ENCODE measurements at regions of chr15 and their contacts with region 1.

Region 1: DNA sequence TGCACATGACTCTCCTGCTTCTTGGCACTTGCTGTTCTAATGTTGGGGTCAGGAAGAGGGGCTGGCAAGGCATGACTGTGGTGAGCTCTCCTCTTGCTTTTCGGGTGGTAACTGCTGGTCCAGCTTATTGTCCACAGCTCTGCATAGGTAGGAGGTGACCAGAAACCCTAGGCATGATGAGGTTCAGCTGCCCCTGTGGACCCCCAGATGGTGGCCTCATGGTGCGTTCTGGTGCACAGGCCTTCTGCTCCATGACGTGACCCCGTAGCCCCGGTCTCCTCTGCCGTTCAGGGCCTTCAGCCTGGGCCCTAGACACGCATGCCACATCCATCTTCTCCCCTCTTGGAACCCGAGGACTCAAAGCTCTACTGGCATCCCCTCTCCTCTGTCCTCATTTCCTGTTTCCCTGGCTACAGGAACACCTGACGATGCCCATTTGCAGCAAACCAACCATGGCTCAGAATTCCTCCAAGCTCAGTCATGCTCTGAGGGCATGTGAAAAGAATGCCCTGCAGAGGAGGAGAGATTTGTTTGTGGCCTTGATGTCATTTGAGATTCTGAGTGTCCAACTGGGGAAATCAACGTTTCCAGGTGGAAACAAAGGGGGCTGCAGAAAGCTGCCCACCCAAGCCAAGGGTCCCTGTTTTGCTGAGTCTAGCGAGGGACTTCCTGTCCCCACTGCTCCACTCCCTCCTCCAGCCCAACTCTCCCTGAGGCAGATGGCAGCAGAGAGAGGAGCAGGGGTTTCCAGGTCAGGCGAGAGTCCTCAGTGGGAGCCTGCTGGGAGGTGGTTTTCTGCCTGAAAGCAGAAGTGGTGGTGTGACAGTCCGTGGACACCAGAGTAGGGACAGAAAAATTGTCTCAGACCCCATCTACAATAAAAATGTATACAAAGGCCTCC is 198.7 kb upstream of the LYSMD4 start:
- DNase-seq: no peak
- ATAC-seq: no peak
- H3K4me3 ChIP-seq: no peak overlapping the region
- H3K27ac ChIP-seq: no peak overlapping the region
- H3K4me1 ChIP-seq: no peaks in the 10 kb centered on the region
- H3K27me3 ChIP-seq: no peaks in the 10 kb centered on the region
- CTCF ChIP-seq: no peak
- POLR2A ChIP-seq: no peak

Region 2: DNA sequence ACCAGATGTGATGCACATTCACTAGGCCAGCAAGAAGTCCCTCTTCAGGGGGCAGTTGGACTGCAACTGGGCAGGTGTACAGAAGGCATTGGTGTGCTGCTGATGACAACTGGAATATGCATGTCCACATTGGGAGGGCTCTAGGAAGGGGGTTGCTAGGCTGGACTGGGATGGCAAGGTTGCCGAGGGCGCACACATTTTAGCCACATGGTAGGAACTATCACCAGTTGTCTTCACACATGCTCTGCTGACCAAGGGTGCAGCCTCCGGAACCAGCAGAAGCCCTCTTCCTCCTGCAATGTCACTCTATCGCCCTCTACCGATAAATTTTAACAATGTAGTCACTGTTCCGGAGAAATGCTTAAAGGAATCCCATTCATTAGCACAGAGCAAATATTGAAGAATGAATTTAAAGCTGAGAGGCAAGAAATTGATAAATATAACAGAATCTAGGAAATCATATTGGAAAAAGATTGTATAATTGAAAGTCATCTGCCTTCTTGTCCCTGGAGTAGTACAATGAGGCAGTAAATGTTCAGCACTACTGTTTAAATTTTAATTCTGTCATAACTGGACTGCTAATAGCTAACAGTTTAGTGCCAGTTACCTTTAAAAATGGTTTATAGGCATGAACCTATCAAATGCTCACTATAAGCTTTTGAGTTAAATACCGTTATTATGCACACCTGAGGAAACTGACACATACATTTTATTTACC is 176.1 kb before region 1 on chr15:
- intact Hi-C with region 1: no loop called
- DNase-seq: peak in 2 of 3 donors; percentile 49 to 55
- ATAC-seq: peak; percentile 96 to 99 (median 97)
- H3K4me3 ChIP-seq: no peak overlapping the region
- H3K27ac ChIP-seq: no peak overlapping the region
- H3K4me1 ChIP-seq: no peaks in the 10 kb centered on the region
- H3K27me3 ChIP-seq: no peaks in the 10 kb centered on the region
- CTCF ChIP-seq: peak; percentile 72 to 89 (median 83)
- POLR2A ChIP-seq: no peak

Region 3: GRCh38 chr15:100338971-100339444 is 407.1 kb after region 1 on chr15:
- intact Hi-C with region 1: loop called (anchors 5 to 10 kb)
- DNase-seq: peak in 2 of 3 donors; percentile 41 to 69
- ATAC-seq: peak; percentile 51 to 62 (median 56)
- H3K4me3 ChIP-seq: no peak overlapping the region
- H3K27ac ChIP-seq: no peak overlapping the region
- H3K4me1 ChIP-seq: peaks cover 0 to 18% (median 0%) of the 10 kb centered on the region in 4 donors
- H3K27me3 ChIP-seq: no peaks in the 10 kb centered on the region
- CTCF ChIP-seq: peak; percentile 63 to 81 (median 73)
- POLR2A ChIP-seq: no peak